Tibial artery (tissue), 4 donors: ENCODE measurements at regions of chr7 and their contacts with region 1.

Region 1: DNA sequence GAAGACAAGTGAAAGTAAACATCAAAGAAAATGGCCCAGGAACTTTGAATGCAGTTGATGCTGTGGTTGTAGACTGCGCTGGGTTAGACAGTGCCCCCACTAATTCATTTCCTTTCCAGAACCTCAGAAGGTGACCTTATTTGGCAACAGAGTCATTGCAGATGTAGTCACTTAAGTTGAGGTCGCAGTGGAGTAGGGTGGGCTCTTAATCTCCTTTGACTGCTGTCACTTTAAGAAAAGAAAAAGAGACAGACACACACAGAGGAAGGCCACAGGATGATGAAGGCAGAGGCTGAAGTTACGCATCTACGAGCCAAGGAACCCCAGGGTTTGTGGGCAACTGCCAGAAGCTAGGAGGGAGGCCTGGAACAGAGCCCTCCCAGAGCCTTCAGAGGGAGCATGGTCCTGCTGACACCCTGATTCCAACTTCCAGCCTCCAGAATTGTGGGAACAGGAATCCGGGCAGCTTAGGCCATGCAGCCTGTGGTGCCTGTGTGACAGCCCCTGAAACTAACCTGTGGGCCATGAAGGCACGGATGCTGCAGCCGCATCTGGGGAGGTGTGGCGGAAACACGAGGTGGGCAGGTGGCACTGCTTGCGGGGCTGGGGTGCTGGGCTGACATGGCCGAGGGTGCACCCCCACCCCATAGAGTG is 107.6 kb downstream of the PRKAG2 start:
- DNase-seq: no peak
- H3K4me3 ChIP-seq: no peak overlapping the region
- H3K27ac ChIP-seq: no peak overlapping the region
- H3K4me1 ChIP-seq: no peaks in the 10 kb centered on the region
- H3K27me3 ChIP-seq: no peaks in the 10 kb centered on the region
- CTCF ChIP-seq: no peak

Region 2: GRCh38 chr7:149832332-149833041 is 1936.8 kb before region 1 on chr7:
- intact Hi-C with region 1: loop called (anchors 5 kb)
- DNase-seq: no peak
- H3K4me3 ChIP-seq: no peak overlapping the region
- H3K27ac ChIP-seq: no peak overlapping the region
- H3K4me1 ChIP-seq: no peaks in the 10 kb centered on the region
- H3K27me3 ChIP-seq: peaks cover 0 to 19% of the 10 kb centered on the region in 2 donors
- CTCF ChIP-seq: no peak

Region 3: DNA sequence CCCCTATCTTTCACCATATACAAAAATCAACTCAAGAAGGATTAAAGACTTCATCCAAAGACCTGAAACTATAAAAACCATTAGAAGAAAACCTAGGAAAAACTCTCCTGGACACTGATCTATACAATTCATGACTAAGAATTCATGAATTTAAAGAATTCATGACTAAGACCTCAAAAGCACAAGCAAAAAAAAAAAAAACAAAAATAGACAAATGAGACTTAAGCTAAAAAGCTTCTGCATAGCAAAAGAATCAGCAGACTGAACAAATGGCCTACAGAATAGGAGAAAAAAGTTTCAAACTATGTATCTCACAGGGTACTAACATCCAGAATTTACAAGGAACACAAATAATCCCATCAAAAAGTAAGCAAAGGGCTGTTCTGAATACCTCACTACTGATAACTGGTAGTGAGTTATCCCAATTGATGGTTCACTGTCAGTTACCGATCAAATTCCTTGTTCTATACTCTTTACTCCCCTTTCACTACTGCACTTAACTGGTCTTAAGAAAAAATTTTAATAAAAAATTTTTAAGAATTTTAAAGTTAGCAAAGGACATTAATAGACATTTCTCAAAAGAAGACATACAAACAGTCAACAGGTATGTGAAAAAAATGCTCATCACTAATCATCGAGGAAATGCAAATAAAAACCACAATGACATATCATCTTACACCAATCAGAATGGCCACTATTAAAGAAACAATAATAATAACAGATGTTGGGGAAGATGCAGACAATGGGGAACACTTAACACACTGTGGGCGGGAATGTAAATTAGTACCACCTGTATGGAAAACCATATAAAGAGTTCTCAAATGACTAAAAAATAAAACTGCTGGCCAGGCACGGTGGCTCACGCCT is 633.3 kb after region 1 on chr7:
- intact Hi-C with region 1: no loop called
- DNase-seq: no peak
- H3K4me3 ChIP-seq: no peak overlapping the region
- H3K27ac ChIP-seq: no peak overlapping the region
- H3K4me1 ChIP-seq: no peaks in the 10 kb centered on the region
- H3K27me3 ChIP-seq: no peaks in the 10 kb centered on the region
- CTCF ChIP-seq: no peak